Cardiac septum (tissue), 1 donor: ENCODE measurements at regions of chr12 and their contacts with region 1.

Region 1: GRCh38 chr12:44015335-44015941 is 179.6 kb downstream of the TMEM117 start:
- DNase-seq: no peak

Region 2: GRCh38 chr12:44929236-44929885 is 913.9 kb after region 1 on chr12:
- intact Hi-C with region 1: loop called (anchors 5 kb)
- DNase-seq: no peak